Activated naive CD4-positive, alpha-beta T cell treated with anti-CD3 and anti-CD28 coated beads for 36 hours (primary cell): ENCODE measurements at regions of chr1 and their contacts with region 1.

Region 1: DNA sequence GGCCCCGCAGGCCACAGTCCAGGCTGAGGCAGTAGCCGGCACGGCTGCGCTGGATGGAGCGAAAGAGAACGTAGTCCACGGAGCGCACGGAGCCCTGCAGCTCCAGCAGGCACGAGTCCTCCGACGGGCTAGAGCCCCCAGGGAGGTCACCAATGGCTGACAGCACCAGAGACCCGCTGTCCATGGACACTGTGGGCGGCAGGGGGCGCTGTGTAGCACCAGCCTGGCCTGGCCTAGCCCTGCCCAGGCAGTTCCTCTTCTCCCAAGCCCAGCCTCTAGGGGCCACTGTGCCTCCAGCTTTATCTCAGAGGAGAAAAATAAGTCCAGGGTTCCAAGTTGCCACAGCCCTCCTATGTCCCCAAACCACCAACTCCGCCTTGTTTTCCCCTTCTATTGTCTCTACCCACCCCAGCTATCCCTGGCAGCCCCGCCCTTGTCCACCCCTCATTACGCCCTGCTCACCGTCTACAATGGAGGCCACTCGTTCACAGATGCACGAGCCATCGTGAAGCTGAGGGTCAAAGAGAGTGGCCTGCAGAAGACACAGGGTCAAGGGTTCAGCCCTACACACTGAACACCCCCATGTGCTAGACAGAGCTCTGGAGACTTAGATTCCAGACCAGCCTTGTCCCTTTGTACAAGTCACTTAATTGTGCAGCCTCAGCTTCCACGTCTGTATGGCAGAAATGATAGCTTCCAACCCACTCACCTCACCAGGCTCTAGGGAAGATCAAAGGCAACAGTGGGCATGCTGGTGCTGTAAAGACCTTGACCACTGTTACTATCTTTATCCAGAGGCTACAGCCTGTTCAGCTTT is 4.4 kb downstream of the ENTREP3 start:
- DNase-seq: peak; percentile 98
- H3K4me3 Mint-ChIP-seq: peak overlapping the region; percentile 47
- H3K27ac Mint-ChIP-seq: no peak overlapping the region
- H3K4me1 Mint-ChIP-seq: peaks cover 26% of the 10 kb centered on the region
- H3K27me3 Mint-ChIP-seq: no peaks in the 10 kb centered on the region

Region 2: GRCh38 chr1:155001675-155002463 is 249.0 kb before region 1 on chr1:
- CTCF ChIA-PET with region 1: no interaction called
- intact Hi-C with region 1: no loop called
- DNase-seq: peak; percentile 100
- H3K4me3 Mint-ChIP-seq: peak overlapping the region; percentile 91
- H3K27ac Mint-ChIP-seq: peak overlapping the region; percentile 94
- H3K4me1 Mint-ChIP-seq: peaks cover 50% of the 10 kb centered on the region
- H3K27me3 Mint-ChIP-seq: no peaks in the 10 kb centered on the region

Region 3: GRCh38 chr1:155193275-155193990 is 57.4 kb before region 1 on chr1:
- CTCF ChIA-PET with region 1: interaction called, 10 read pairs
- intact Hi-C with region 1: no loop called
- DNase-seq: peak; percentile 86
- H3K4me3 Mint-ChIP-seq: peak overlapping the region; percentile 93
- H3K27ac Mint-ChIP-seq: peak overlapping the region; percentile 96
- H3K4me1 Mint-ChIP-seq: peaks cover 27% of the 10 kb centered on the region
- H3K27me3 Mint-ChIP-seq: no peaks in the 10 kb centered on the region

Region 4: GRCh38 chr1:155267373-155267772 is 16.5 kb after region 1 on chr1:
- CTCF ChIA-PET with region 1: interaction called, 64 read pairs
- intact Hi-C with region 1: no loop called
- DNase-seq: no peak
- H3K4me3 Mint-ChIP-seq: no peak overlapping the region
- H3K27ac Mint-ChIP-seq: no peak overlapping the region
- H3K4me1 Mint-ChIP-seq: peaks cover 26% of the 10 kb centered on the region
- H3K27me3 Mint-ChIP-seq: no peaks in the 10 kb centered on the region

Region 5: GRCh38 chr1:155308493-155309422 is 57.9 kb after region 1 on chr1 and contains the start of gene FDPS:
- CTCF ChIA-PET with region 1: interaction called, 34 read pairs
- intact Hi-C with region 1: loop called (anchors 1 kb)
- DNase-seq: peak; percentile 99
- H3K4me3 Mint-ChIP-seq: peak within 1 kb of the TSS; percentile 96
- H3K27ac Mint-ChIP-seq: peak within 1 kb of the TSS; percentile 99
- H3K4me1 Mint-ChIP-seq: peaks cover 35% of the 10 kb centered on the region
- H3K27me3 Mint-ChIP-seq: no peaks in the 10 kb centered on the region
- total RNA-seq, gene FDPS: 332 to 333 TPM

Region 6: DNA sequence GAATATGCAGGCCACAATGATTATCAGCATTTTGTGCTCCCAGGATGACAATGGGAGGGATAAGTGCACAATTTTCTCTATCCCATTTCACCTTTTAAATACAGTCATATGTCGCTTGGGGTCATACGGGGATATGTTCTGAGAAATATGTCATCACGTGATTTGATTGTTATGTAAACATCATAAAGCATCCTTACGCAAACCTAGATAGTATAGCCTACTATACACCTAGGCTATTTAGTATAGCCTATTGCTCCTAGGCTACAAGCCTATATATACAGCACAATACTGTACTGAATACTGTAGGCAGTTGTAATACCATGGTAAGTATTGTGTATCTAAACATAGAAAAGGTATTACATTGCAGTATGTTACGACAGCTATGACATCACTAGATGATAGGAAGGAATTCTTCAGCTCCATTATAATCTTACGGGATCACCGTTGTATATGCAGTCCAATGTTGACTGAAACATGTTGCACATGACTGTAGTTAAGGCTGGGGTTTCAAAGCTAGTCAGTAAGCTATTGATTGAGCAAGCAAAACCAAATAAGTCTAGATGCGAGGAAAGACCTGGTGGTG is 88.8 kb after region 1 on chr1:
- CTCF ChIA-PET with region 1: interaction called, 11 read pairs
- intact Hi-C with region 1: no loop called
- DNase-seq: no peak
- H3K4me3 Mint-ChIP-seq: no peak overlapping the region
- H3K27ac Mint-ChIP-seq: no peak overlapping the region
- H3K4me1 Mint-ChIP-seq: no peaks in the 10 kb centered on the region
- H3K27me3 Mint-ChIP-seq: no peaks in the 10 kb centered on the region

Region 7: DNA sequence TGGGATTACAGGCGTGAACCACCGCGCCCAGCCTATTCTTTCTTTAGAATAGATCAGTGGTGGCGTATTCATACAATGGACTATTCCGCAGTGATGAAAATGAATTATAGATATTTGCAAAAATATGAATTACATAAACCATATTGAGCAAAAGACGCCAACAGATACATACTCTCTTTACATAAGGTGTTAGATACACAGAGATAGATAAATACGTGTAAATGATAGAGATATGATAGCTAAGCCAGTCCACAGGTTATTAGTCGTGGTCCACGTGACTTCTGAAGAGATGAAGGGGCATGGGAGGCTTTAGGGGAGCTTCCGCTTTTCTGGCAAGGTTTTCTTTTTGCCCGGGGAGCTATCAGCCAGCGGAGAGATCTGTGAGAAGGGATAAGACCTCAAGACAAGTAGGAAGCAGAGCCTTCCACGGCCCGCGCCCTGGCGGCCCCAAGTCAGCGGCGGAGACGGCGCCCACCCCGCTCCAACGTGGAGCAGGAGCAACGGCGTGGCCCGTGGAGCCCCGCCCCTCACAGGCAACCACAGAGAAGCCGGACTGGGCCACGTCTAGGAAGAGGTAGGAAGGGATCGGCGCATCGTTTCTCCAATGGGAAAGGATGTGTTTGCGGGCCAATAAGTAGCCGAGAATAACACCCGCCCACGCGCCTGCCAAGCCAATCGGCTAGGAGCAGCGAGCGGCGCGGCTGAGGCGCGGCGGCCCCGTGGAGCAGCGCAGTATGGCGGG is 358.8 kb after region 1 on chr1 and contains the start of gene MSTO1:
- CTCF ChIA-PET with region 1: interaction called, 10 read pairs
- intact Hi-C with region 1: no loop called
- DNase-seq: peak; percentile 100
- H3K4me3 Mint-ChIP-seq: peak within 1 kb of the TSS; percentile 93
- H3K27ac Mint-ChIP-seq: peak within 1 kb of the TSS; percentile 87
- H3K4me1 Mint-ChIP-seq: peaks cover 13% of the 10 kb centered on the region
- H3K27me3 Mint-ChIP-seq: no peaks in the 10 kb centered on the region
- total RNA-seq, gene MSTO1: 58.6 to 63.1 TPM